Heart left ventricle (tissue), 16 donors: ENCODE measurements at regions of chr3 and their contacts with region 1.

Region 1: DNA sequence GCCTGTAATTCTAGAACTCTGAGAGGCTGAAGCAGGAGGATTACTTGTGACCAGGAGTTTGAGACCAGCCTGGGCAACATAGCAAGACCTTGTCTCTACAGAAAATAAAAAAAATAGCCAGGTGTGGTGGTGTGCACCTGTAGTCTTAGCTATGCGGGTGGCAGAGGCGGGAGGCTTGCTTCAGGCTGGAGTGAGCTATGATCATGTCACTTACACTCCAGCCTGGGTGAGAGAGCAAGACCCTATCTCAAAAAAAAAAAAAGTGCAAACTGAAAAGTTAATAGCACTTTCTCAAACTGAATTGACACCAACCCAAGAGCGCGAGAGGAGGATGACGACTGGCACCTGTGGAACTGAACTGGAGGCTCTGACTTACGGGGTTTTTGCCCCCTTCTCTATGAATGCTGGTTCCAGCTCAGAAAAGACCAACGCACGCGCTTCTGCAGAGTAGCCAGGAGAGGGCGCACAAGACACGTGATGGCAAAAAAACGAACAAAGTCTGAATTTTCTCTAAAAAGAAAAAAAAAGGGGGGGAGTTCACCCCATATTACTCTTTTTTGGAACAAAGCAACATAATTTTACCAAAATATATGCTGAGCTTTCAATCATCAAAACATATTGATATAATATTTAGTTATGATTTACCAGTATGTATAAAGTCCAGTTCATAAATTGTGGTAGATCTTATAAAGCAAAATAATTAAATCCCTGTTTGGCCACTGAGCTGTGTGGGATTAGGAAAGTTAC is 23.7 kb downstream of the CFAP92 start:
- DNase-seq: peak in 3 of 5 donors; percentile 23 to 47 (median 39)
- ATAC-seq: peak in 2 of 4 donors; percentile 38 to 40
- H3K4me3 ChIP-seq: no peak overlapping the region
- H3K27ac ChIP-seq: peak overlapping the region in 4 of 12 donors; percentile 52 to 79 (median 64)
- H3K4me1 ChIP-seq: peaks cover 0 to 22% (median 12%) of the 10 kb centered on the region in 12 donors
- H3K27me3 ChIP-seq: no peaks in the 10 kb centered on the region
- CTCF ChIP-seq: peak; percentile 84 to 97 (median 92)
- POLR2A ChIP-seq: no peak

Region 2: GRCh38 chr3:128922804-128923459 is 47.2 kb before region 1 on chr3:
- intact Hi-C with region 1: no loop called
- DNase-seq: no peak
- ATAC-seq: no peak
- H3K4me3 ChIP-seq: no peak overlapping the region
- H3K27ac ChIP-seq: no peak overlapping the region
- H3K4me1 ChIP-seq: no peaks in the 10 kb centered on the region
- H3K27me3 ChIP-seq: no peaks in the 10 kb centered on the region
- CTCF ChIP-seq: no peak
- POLR2A ChIP-seq: no peak

Region 3: DNA sequence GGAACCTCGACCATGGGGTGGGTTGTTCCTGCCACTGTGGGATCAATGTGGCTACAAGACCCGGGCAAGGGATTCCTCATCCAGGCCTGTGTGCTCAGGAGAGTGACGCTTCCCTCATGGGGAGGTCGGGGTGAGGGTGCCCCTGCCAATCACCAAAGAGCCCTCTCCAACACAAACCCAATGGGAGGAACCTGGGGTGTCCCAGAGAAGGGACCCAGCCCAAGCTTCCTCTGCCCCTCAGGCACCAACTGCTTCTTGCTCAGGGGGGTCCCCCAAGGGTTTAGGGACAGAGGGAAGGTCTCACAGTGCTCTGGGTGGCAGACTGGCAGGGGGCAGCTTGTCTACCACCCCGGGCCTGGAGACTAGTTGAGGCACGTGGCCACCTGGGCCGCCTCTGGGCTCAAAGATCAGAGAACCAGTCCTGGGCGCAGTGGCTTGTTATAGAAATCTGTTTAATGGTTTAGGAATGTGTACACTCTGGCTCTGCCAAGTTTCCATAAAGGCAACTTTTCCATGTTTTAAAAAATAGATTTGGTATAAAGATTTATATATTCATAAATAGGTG is 117.1 kb after region 1 on chr3:
- intact Hi-C with region 1: loop called in 6 of 10 experiments (anchors 1 to 10 kb)
- DNase-seq: peak in 4 of 5 donors; percentile 58 to 63 (median 60)
- ATAC-seq: peak; percentile 35 to 83 (median 78)
- H3K4me3 ChIP-seq: no peak overlapping the region
- H3K27ac ChIP-seq: peak overlapping the region; percentile 18 to 97 (median 82)
- H3K4me1 ChIP-seq: peaks cover 0 to 12% (median 7%) of the 10 kb centered on the region in 12 donors
- H3K27me3 ChIP-seq: no peaks in the 10 kb centered on the region
- CTCF ChIP-seq: no peak
- POLR2A ChIP-seq: no peak

Region 4: GRCh38 chr3:129101370-129102138 is 131.4 kb after region 1 on chr3:
- intact Hi-C with region 1: loop called in 1 of 10 experiments (anchors 5 kb)
- DNase-seq: peak in 1 of 5 donors; percentile 34
- ATAC-seq: peak; percentile 61 to 77 (median 66)
- H3K4me3 ChIP-seq: no peak overlapping the region
- H3K27ac ChIP-seq: no peak overlapping the region
- H3K4me1 ChIP-seq: peaks cover 0 to 29% (median 12%) of the 10 kb centered on the region in 12 donors
- H3K27me3 ChIP-seq: no peaks in the 10 kb centered on the region
- CTCF ChIP-seq: no peak
- POLR2A ChIP-seq: no peak

Region 5: GRCh38 chr3:129238945-129239706 is 269.0 kb after region 1 on chr3:
- intact Hi-C with region 1: loop called in 4 of 10 experiments (anchors 2 to 5 kb)
- DNase-seq: no peak
- ATAC-seq: peak in 3 of 4 donors; percentile 66 to 83 (median 77)
- H3K4me3 ChIP-seq: no peak overlapping the region
- H3K27ac ChIP-seq: peak overlapping the region in 7 of 12 donors; percentile 14 to 93 (median 52)
- H3K4me1 ChIP-seq: peaks cover 0 to 55% (median 6%) of the 10 kb centered on the region in 12 donors
- H3K27me3 ChIP-seq: no peaks in the 10 kb centered on the region
- CTCF ChIP-seq: no peak
- POLR2A ChIP-seq: no peak

Region 6: DNA sequence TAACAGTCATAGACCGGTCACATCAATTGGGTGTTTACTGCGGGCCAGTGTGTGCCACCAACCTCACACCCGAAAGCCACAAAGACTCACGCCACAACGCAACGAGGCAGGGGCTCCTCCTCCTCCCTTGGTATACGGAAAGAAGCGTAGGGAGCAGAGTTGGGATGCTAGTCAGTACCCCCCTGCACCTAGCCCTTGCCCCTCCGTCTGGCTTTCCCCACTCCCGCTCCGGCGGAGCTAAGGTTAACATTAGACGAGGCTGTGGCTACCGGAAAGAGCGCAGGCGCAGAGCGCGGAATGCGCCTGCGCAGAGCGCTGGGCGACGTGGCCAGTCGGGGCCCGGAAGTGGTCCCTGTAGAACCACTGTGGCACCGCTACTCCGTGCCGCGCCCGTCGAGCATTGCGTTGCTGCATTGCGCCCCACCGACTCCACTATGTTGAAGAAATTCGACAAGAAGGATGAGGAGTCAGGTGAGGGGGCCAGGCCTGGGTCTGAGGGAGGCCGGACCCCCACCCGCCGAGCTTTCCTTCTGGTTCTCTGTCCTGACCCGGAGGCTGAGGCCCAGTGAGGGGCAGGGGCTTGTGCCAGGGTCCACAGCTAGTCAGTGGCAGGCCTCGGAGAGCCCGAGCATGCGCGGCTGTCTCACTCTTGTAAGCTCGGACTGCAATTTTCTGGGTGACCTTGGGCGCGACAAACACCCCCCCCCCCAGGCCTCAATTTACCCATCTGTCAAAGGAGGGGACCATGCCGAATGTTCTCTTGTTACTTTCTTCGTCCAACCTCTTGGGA is 279.3 kb after region 1 on chr3 and contains the start of gene COPG1:
- intact Hi-C with region 1: loop called (anchors 1 to 5 kb)
- DNase-seq: peak; percentile 85 to 94 (median 87)
- ATAC-seq: peak; percentile 85 to 95 (median 94)
- H3K4me3 ChIP-seq: peak within 1 kb of the TSS; percentile 60 to 100 (median 96)
- H3K27ac ChIP-seq: peak within 1 kb of the TSS; percentile 72 to 97 (median 85)
- H3K4me1 ChIP-seq: peaks cover 0 to 53% (median 32%) of the 10 kb centered on the region in 12 donors
- H3K27me3 ChIP-seq: no peaks in the 10 kb centered on the region
- CTCF ChIP-seq: peak in 1 of 12 donors; percentile 14
- POLR2A ChIP-seq: peak; percentile 27 to 89
- total RNA-seq, gene COPG1: 78.6 to 121 (median 93.9) TPM